ENCODE measurements at regions of chr15 and their contacts with region 1.

Region 1: DNA sequence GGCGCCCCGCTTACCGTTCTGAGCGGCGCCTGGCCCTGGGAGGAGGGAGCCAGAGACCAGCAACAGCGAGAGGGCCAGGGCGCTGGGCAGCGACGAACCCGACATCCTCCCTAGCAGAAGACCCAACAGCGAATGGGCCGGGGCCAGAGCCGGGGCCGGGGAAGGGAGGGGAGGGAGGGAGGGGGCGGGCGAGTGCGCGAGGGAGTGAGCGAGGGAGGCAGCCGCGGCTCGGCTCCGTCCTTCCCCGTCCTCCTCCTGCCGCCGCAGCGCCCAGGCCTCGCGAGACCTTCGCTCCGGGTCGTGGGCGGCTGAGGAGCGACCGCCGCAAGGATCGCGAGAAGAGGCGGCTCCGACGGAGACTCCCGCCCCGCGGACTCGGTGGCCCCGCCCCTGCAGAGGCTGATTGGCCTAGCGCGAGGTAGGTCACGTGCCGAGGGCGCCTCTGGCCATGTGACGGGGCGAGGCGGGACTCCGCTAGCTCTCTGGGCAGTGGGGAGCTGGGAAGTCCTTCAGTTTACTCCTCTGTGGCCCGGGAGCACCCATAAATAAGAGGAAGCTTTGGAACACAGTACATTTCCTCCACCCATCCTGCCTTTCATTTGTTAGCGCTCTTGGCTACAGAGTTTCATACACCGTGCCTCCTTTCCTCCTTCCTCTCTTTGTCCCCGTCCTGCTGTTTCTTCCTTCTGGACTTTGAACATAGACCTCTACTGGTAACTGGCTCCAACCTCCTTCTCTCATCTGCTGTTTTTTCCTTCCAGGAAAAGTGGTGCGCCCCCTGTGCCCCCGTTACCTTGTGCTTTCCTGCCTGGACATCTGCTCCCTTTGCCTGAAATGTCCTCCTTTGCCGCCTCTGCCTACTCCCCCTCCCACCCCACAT is at the start of gene NPTN:
- DNase-seq: peak; percentile 99
- H3K4me3 ChIP-seq: peak within 1 kb of the TSS; percentile 79 to 99 (median 92)
- H3K27ac ChIP-seq: peak within 1 kb of the TSS; percentile 97 to 99 (median 98)
- H3K4me1 ChIP-seq: peaks cover 13 to 48% (median 46%) of the 10 kb centered on the region in 4 donors
- H3K27me3 ChIP-seq: no peaks in the 10 kb centered on the region
- CTCF ChIP-seq: peak in 1 of 5 experiments; percentile 4
- EP300 ChIP-seq: no peak
- POLR2A ChIP-seq: peak; percentile 86
- total RNA-seq, gene NPTN: 77.8 to 187 (median 135) TPM

Region 2: DNA sequence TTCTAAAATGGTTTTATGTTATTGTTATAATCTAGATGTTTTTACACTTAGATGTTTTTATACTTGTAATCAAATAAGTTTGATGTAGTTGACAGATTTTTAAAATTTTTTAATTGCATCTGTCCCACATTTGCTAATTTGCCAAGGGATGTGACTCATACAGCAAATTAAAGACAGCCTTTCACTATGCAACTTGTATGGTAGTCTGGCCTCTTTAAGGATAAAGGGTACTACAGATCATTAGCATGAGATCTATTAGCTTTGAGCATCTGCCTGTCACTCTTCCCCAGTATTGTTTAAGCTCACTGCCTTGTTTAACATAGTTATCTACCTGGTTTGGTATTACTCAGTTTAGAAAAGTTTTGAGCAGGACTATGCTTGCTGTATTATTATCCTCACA is 83.2 kb before region 1 on chr15:
- in situ Hi-C with region 1: loop called in 1 of 4 experiments (anchors 10 kb)
- intact Hi-C with region 1: no loop called
- DNase-seq: no peak
- H3K4me3 ChIP-seq: no peak overlapping the region
- H3K27ac ChIP-seq: no peak overlapping the region
- H3K4me1 ChIP-seq: no peaks in the 10 kb centered on the region
- H3K27me3 ChIP-seq: no peaks in the 10 kb centered on the region
- CTCF ChIP-seq: no peak
- EP300 ChIP-seq: no peak
- POLR2A ChIP-seq: no peak

Region 3: GRCh38 chr15:73560501-73561117 is 72.7 kb before region 1 on chr15:
- in situ Hi-C with region 1: loop called (anchors 5 to 10 kb)
- intact Hi-C with region 1: no loop called
- DNase-seq: no peak
- H3K4me3 ChIP-seq: no peak overlapping the region
- H3K27ac ChIP-seq: no peak overlapping the region
- H3K4me1 ChIP-seq: peaks cover 0 to 5% (median 0%) of the 10 kb centered on the region in 4 donors
- H3K27me3 ChIP-seq: no peaks in the 10 kb centered on the region
- CTCF ChIP-seq: peak; percentile 34 to 61 (median 51)
- EP300 ChIP-seq: no peak
- POLR2A ChIP-seq: no peak

Region 4: GRCh38 chr15:73573572-73573971 is 59.8 kb before region 1 on chr15:
- in situ Hi-C with region 1: loop called in 1 of 4 experiments (anchors 10 kb)
- intact Hi-C with region 1: loop called (anchors 5 kb)
- DNase-seq: peak; percentile 89
- H3K4me3 ChIP-seq: no peak overlapping the region
- H3K27ac ChIP-seq: peak overlapping the region; percentile 74 to 78 (median 76)
- H3K4me1 ChIP-seq: peaks cover 13 to 46% (median 23%) of the 10 kb centered on the region in 4 donors
- H3K27me3 ChIP-seq: no peaks in the 10 kb centered on the region
- CTCF ChIP-seq: no peak
- EP300 ChIP-seq: no peak
- POLR2A ChIP-seq: no peak

Region 5: GRCh38 chr15:73601451-73602445 is 31.6 kb before region 1 on chr15:
- in situ Hi-C with region 1: no loop called
- intact Hi-C with region 1: loop called (anchors 1 kb)
- DNase-seq: peak; percentile 44
- H3K4me3 ChIP-seq: no peak overlapping the region
- H3K27ac ChIP-seq: peak overlapping the region; percentile 73 to 83 (median 78)
- H3K4me1 ChIP-seq: peaks cover 32 to 85% (median 68%) of the 10 kb centered on the region in 4 donors
- H3K27me3 ChIP-seq: no peaks in the 10 kb centered on the region
- CTCF ChIP-seq: no peak
- EP300 ChIP-seq: no peak
- POLR2A ChIP-seq: no peak

Region 6: GRCh38 chr15:73697033-73697467 is 63.7 kb after region 1 on chr15:
- in situ Hi-C with region 1: loop called in 3 of 4 experiments (anchors 5 to 10 kb)
- intact Hi-C with region 1: no loop called
- DNase-seq: peak; percentile 72
- H3K4me3 ChIP-seq: no peak overlapping the region
- H3K27ac ChIP-seq: peak overlapping the region in 3 of 4 donors; percentile 37 to 48 (median 46)
- H3K4me1 ChIP-seq: peaks cover 10 to 33% (median 28%) of the 10 kb centered on the region in 4 donors
- H3K27me3 ChIP-seq: no peaks in the 10 kb centered on the region
- CTCF ChIP-seq: no peak
- EP300 ChIP-seq: no peak
- POLR2A ChIP-seq: no peak